Psoas muscle (tissue), 8 donors: ENCODE measurements at regions of chr9 and their contacts with region 1.

Region 1: GRCh38 chr9:32463500-32464293 is 62.3 kb downstream of the RIGI start:
- DNase-seq: no peak
- ATAC-seq: no peak
- H3K4me3 ChIP-seq: no peak overlapping the region
- H3K27ac ChIP-seq: no peak overlapping the region
- H3K4me1 ChIP-seq: no peaks in the 10 kb centered on the region
- H3K27me3 ChIP-seq: no peaks in the 10 kb centered on the region
- CTCF ChIP-seq: no peak

Region 2: GRCh38 chr9:30913331-30913730 is 1550.4 kb before region 1 on chr9:
- intact Hi-C with region 1: loop called in 1 of 2 experiments (anchors 10 kb)
- DNase-seq: no peak
- ATAC-seq: no peak
- H3K4me3 ChIP-seq: no peak overlapping the region
- H3K27ac ChIP-seq: no peak overlapping the region
- H3K4me1 ChIP-seq: no peaks in the 10 kb centered on the region
- H3K27me3 ChIP-seq: no peaks in the 10 kb centered on the region
- CTCF ChIP-seq: no peak